Activated T-helper 1 cell treated with anti-CD3 and anti-CD28 coated beads, Interleukin-12 subunit alpha, Interleukin-12 subunit beta, Interleukin-2, Interleukin-4 antibody, amounts not matched to agents 30 ng/mL and 10 ng/mL and 1 ng/mL, durations not matched to agents 14 hours and 24 hours and 36 hours (primary cell): ENCODE measurements at regions of chr12 and their contacts with region 1.

Region 1: DNA sequence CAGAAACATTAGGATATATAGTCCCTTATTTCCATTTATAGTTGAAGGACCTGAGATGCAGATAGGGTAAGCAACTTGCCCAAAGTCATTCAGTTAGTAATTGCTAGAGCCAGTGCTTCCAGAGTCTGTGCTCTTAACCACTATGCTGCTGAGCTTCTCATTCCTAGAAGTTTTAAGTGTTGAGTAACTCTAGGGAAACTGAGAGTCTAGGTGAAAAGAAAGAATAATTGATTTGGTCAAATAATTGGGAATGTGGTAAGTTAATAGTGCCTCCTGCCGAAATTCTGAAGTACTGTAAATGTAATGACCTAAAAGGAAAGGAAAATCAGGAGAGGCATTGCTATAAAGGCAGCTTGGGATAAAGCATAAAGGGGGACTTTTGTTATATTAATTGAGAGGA is 14.1 kb downstream of the PYROXD1 start:
- DNase-seq: no peak
- H3K4me3 Mint-ChIP-seq: no peak overlapping the region
- H3K27ac Mint-ChIP-seq: no peak overlapping the region
- H3K4me1 Mint-ChIP-seq: peaks cover 50% of the 10 kb centered on the region
- H3K27me3 Mint-ChIP-seq: no peaks in the 10 kb centered on the region

Region 2: DNA sequence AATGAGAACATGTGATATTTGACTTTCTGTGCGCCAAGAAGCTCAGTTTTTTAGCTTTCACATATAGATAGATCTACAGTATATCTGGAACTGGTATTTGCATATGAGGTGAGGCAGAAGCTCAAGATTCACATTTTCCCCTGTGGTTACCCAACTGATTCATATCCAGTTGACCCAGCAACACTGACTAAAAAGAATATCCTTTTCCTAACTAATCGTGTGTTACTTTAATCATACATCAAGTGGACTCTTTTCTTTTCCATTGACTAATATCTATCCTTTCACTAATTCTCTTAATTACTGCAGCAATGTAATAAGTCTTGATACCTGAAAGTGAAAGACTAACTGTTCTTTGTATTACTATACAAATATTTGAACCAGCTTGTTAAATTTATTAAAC is 1776.2 kb before region 1 on chr12:
- intact Hi-C with region 1: loop called (anchors 5 kb)
- DNase-seq: no peak
- H3K4me3 Mint-ChIP-seq: no peak overlapping the region
- H3K27ac Mint-ChIP-seq: peak overlapping the region; percentile 45
- H3K4me1 Mint-ChIP-seq: peaks cover 41% of the 10 kb centered on the region
- H3K27me3 Mint-ChIP-seq: peaks cover 8% of the 10 kb centered on the region

Region 3: GRCh38 chr12:21428241-21428640 is 23.3 kb before region 1 on chr12:
- intact Hi-C with region 1: no loop called
- DNase-seq: no peak
- H3K4me3 Mint-ChIP-seq: no peak overlapping the region
- H3K27ac Mint-ChIP-seq: no peak overlapping the region
- H3K4me1 Mint-ChIP-seq: no peaks in the 10 kb centered on the region
- H3K27me3 Mint-ChIP-seq: peaks cover 10% of the 10 kb centered on the region

Region 4: GRCh38 chr12:21476949-21477348 is 25.4 kb after region 1 on chr12:
- intact Hi-C with region 1: loop called (anchors 1 kb)
- DNase-seq: no peak
- H3K4me3 Mint-ChIP-seq: no peak overlapping the region
- H3K27ac Mint-ChIP-seq: peak overlapping the region; percentile 83
- H3K4me1 Mint-ChIP-seq: peaks cover 22% of the 10 kb centered on the region
- H3K27me3 Mint-ChIP-seq: no peaks in the 10 kb centered on the region

Region 5: DNA sequence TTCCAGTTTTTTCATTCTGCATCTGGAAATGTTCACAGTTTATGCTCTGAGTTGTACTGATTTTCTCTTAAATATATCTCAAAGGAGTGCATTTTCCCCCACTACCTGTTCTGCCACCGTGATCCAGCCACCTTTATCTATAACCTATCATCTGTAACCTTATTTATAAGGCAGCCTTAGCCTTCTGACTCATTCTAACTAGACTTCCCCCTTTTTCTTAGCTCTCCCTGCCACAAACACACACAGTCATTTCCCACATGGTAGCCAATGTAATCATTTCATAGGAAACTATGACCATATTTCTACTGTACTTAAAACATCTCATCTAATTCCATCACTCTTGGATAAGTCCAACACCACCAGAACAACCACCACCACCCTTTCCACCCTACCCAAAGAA is 163.9 kb after region 1 on chr12:
- intact Hi-C with region 1: loop called (anchors 1 kb)
- DNase-seq: no peak
- H3K4me3 Mint-ChIP-seq: peak overlapping the region; percentile 46
- H3K27ac Mint-ChIP-seq: peak overlapping the region; percentile 45
- H3K4me1 Mint-ChIP-seq: peaks cover 46% of the 10 kb centered on the region
- H3K27me3 Mint-ChIP-seq: peaks cover 2% of the 10 kb centered on the region

Region 6: GRCh38 chr12:21710948-21711775 is 259.6 kb after region 1 on chr12:
- intact Hi-C with region 1: no loop called
- DNase-seq: no peak
- H3K4me3 Mint-ChIP-seq: no peak overlapping the region
- H3K27ac Mint-ChIP-seq: no peak overlapping the region
- H3K4me1 Mint-ChIP-seq: peaks cover 5% of the 10 kb centered on the region
- H3K27me3 Mint-ChIP-seq: peaks cover 10% of the 10 kb centered on the region

Region 7: DNA sequence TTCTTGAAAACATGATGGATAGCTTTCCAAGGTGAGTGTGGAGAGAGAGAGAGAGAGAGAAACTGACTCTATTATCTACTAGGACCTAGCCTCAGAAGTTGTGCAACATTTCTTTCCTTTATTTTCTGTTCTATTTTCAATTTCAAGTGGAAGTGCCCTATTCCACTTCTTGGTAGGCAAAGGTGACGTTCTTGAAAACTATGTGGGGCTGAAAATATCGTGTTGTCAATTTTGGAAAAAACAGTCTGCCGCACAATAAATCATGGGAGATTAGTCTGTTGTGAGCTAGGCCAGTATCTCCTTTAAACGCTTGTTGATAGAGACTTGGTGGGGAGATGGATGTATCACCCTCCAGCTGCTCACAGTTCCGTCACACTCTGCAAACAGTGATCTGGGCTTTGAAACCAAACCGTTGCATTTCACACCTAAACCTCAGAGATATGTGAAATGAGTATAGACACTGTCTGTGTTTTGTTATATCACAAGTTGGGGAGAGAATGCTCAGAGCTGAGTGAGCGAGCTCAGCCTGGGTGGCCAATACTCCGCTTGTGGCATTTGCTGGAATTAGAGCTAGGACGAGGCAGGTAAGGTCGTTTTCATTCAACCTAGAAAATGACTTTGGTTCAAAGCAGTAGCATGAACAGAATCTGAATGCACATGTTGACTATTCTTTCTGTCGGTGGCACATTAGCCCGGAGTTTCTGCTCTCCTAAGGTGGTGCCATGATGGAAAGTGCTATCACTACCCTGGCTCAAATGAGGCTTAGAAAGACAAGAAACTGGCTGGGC is 958.0 kb after region 1 on chr12:
- intact Hi-C with region 1: loop called (anchors 10 kb)
- DNase-seq: peak; percentile 52
- H3K4me3 Mint-ChIP-seq: peak overlapping the region; percentile 6
- H3K27ac Mint-ChIP-seq: peak overlapping the region; percentile 54
- H3K4me1 Mint-ChIP-seq: peaks cover 31% of the 10 kb centered on the region
- H3K27me3 Mint-ChIP-seq: no peaks in the 10 kb centered on the region